ENCODE measurements at regions of chr14 and their contacts with region 1.

Region 1: DNA sequence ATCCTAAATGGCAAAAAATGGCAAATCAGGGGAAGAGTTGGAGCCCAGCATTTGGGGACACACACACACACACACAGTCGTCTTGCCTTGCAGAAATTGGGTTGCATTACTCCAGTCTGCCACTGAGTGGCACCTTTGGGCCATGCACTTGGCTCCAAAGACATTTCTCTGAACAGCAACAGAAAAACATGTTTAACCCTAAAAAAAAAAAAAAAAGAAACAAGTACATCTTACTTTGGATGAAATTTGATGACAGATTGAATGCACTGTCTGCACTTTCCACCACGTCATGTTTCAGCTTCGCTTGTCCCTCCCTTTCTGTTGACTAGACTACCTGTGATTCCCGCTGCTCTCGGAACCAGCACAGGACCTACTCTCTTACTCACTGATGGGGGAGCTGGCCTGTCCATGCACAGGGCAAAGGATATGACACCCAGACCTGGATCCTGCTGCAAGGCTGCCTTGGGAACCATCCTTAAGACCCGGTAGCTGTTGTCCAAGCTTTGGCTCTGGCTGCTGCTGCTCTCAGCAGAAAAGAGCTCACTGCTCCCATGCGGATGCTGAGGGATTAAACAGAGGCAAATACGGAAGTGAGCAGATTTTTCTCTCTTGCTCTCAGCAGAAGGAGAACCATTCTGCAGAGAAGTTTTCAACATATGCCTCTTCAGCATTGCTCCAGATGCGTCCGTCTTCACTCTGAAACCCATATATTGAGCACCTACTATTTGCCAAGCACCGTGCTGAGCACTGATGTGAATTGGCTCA is 376.8 kb downstream of the DPF3 start:
- DNase-seq: peak in 2 of 3 donors; percentile 69 to 87
- ATAC-seq: peak; percentile 82
- H3K4me3 ChIP-seq: no peak overlapping the region
- H3K4me1 ChIP-seq: no peaks in the 10 kb centered on the region
- CTCF ChIP-seq: peak; percentile 78

Region 2: GRCh38 chr14:72692696-72693095 is 175.6 kb after region 1 on chr14:
- intact Hi-C with region 1: no loop called
- DNase-seq: no peak
- ATAC-seq: no peak
- H3K4me3 ChIP-seq: no peak overlapping the region
- H3K4me1 ChIP-seq: no peaks in the 10 kb centered on the region
- CTCF ChIP-seq: no peak

Region 3: DNA sequence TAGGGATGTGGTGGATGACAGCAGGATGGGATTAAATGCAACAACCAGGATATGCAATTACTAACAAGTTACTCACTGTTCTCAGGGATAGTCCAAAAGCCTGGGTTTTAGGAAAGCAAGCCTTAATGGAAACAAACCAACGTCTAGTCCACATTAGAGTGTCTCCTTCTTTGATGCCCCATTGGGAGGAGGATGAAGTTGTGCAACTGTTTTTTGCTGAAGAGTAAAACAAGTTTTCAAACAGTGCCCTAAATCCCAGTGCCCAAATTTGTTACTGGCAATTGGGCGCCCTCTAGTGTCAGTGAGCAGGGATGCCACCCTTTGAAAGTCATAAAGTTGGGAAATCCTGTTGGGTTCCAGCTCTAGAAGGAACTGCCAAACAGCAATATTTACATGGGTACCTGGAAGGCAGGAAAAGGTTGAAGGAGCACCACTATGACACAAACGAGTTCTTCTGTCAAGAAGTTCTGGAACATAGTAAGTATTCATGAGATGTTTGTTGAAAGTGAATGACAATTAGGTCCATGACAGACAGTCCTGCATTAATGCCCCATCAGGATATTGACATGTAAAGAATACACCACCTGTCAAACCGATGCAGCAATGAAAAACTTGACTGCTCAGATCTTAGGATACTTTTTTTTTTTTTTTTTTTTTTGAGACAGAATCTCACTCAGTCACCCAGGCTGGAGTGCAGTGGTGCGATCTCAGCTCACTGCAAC is 387.9 kb after region 1 on chr14:
- intact Hi-C with region 1: loop called (anchors 2 to 5 kb)
- DNase-seq: peak in 2 of 3 donors; percentile 51 to 72
- ATAC-seq: peak; percentile 83
- H3K4me3 ChIP-seq: no peak overlapping the region
- H3K4me1 ChIP-seq: peaks cover 11% of the 10 kb centered on the region
- CTCF ChIP-seq: peak; percentile 84

Region 4: DNA sequence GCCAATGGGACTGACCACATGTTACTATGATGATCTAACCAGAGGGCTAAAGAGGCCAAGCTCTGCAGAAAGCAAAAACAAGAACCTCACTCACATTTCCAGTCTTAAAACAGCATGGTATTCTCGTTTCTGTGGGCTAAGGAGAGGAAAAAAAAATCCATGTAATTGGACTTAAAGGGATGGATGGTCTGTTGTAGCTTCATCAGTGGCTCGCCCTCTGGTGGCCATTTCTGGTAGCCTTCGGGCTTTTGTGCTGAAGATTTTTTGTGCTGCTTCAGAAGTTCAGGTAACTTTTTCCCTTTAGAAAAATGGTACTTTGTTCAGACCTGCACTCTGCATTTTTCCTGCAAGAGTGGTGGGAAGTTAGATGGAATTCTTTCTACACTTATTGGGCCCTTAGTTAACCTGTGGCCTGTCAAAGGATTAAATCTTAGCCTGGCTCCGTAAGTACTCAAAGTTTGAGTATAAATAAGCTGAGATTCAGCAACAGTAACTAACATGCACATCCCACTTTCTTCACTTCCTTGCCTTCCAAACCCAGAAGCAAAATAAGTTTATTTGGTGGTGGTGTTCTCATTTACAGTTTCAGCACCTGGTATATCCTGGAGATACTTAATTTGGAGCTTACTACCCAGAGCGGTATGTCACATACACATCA is 431.5 kb after region 1 on chr14:
- intact Hi-C with region 1: loop called (anchors 5 kb)
- DNase-seq: peak in 2 of 3 donors; percentile 74 to 91
- ATAC-seq: peak; percentile 74
- H3K4me3 ChIP-seq: no peak overlapping the region
- H3K4me1 ChIP-seq: no peaks in the 10 kb centered on the region
- CTCF ChIP-seq: peak; percentile 87